SK-N-SH (cell line): ENCODE measurements at regions of chr17 and their contacts with region 1.

Region 1: DNA sequence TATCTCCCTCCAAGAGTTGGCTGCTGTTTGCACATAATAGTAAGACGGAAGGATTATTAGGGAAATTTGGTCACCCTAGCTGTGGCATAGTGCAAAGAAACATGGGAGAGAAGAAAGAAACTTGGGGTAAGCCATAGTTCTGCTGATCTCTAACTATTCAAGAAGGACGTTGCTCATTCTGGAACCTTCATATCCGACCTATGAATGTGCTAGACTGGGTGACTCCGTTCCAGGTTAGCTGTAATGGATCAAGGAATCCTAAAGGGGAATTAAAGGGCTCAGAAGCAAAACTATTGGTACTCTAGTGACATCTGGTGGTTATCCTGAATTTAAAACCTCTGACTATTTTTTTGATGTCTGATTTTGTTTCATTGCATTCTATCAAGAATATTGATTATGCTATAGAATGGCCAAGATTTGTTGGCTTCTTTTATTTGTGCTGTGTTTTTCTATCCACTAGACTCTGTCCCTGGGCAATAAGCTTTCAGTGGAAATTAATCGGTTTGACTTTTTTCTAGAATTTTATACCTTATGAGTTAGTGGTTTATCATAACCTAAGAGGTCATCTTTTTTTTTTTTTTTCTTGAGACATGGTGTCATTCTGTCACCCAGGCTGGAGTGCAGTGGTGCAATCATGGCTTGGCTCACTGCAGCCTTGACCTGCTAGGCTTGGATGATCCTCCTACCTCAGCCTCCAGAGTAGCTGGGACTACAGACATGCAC is 19.5 kb downstream of the PCTP start:
- DNase-seq: peak; percentile 73
- H3K4me3 ChIP-seq: no peak overlapping the region; a peak in 1 of 4 replicates
- H3K27ac ChIP-seq: no peak overlapping the region
- H3K4me1 ChIP-seq: peaks cover 8 to 9% of the 10 kb centered on the region in 2 experiments
- H3K27me3 ChIP-seq: no peaks in the 10 kb centered on the region
- CTCF ChIP-seq: peak; percentile 85
- EP300 ChIP-seq: no peak
- RAD21 ChIP-seq: peak; percentile 94

Region 2: GRCh38 chr17:55356434-55357328 is 413.6 kb before region 1 on chr17:
- CTCF ChIA-PET with region 1: interaction called, 11 read pairs
- POLR2A ChIA-PET with region 1: no interaction called
- DNase-seq: peak; percentile 74
- H3K4me3 ChIP-seq: no peak overlapping the region
- H3K27ac ChIP-seq: no peak overlapping the region
- H3K4me1 ChIP-seq: no peaks in the 10 kb centered on the region; a peak in 1 of 4 replicates
- H3K27me3 ChIP-seq: no peaks in the 10 kb centered on the region
- CTCF ChIP-seq: peak; percentile 97
- EP300 ChIP-seq: peak in 1 of 2 experiments; percentile 38; a peak in 1 of 4 replicates
- RAD21 ChIP-seq: peak; percentile 88

Region 3: GRCh38 chr17:55601874-55602364 is 168.4 kb before region 1 on chr17:
- CTCF ChIA-PET with region 1: interaction called, 47 read pairs
- POLR2A ChIA-PET with region 1: no interaction called
- DNase-seq: peak; percentile 52
- H3K4me3 ChIP-seq: no peak overlapping the region
- H3K27ac ChIP-seq: no peak overlapping the region
- H3K4me1 ChIP-seq: no peaks in the 10 kb centered on the region
- H3K27me3 ChIP-seq: no peaks in the 10 kb centered on the region
- CTCF ChIP-seq: peak; percentile 83
- EP300 ChIP-seq: no peak
- RAD21 ChIP-seq: peak; percentile 92

Region 4: DNA sequence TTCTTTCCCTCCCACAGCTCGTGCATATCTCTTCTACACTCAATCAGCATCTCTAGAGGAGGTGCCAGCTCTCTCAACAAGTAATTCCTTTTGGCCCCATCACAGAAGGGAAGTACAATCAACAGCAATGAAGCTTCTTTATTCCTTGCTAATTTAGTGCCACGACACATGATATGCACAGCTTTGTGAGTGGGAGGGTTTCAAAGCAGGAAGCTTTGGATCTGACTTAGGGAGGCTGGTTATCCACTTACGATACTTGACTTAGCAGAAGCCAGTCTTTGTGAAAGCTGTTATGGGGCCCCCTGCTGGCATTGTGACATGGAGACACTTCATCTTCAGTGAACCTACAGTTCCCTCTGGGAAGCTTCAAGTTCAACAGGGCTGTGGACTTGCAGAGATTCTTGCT is 128.6 kb before region 1 on chr17:
- CTCF ChIA-PET with region 1: interaction called, 16 read pairs
- POLR2A ChIA-PET with region 1: no interaction called
- DNase-seq: peak; percentile 49
- H3K4me3 ChIP-seq: no peak overlapping the region
- H3K27ac ChIP-seq: no peak overlapping the region
- H3K4me1 ChIP-seq: no peaks in the 10 kb centered on the region; a peak in 1 of 4 replicates
- H3K27me3 ChIP-seq: no peaks in the 10 kb centered on the region; the same call in 1 of the 2 replicates
- CTCF ChIP-seq: peak; percentile 78
- EP300 ChIP-seq: no peak
- RAD21 ChIP-seq: peak; percentile 78

Region 5: DNA sequence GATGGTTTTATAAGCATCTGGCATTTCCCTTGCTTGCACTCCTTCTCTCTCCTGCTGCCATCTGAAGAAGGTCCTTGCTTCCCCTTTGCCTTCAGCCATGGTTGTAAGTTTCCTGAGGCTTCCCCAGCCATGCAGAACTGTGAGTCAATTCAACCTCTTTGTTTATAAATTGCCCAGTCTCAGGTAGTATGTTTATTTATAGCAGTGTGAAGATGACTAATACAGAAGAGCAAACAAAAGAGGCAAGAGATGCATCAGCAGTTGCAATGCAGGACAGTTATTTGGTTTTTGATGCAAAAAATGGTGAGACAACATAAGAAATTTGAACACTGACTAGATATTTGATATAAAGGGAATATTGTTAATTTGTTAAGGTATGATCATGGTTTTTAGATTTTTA is 64.5 kb before region 1 on chr17:
- CTCF ChIA-PET with region 1: interaction called, 18 read pairs
- POLR2A ChIA-PET with region 1: no interaction called
- DNase-seq: no peak
- H3K4me3 ChIP-seq: no peak overlapping the region
- H3K27ac ChIP-seq: no peak overlapping the region; a peak in 1 of 4 replicates
- H3K4me1 ChIP-seq: peaks cover 0 to 18% of the 10 kb centered on the region in 2 experiments; a peak in 2 of 4 replicates
- H3K27me3 ChIP-seq: peaks cover 7% of the 10 kb centered on the region; the same call in 1 of the 2 replicates
- CTCF ChIP-seq: no peak
- EP300 ChIP-seq: no peak
- RAD21 ChIP-seq: no peak

Region 6: DNA sequence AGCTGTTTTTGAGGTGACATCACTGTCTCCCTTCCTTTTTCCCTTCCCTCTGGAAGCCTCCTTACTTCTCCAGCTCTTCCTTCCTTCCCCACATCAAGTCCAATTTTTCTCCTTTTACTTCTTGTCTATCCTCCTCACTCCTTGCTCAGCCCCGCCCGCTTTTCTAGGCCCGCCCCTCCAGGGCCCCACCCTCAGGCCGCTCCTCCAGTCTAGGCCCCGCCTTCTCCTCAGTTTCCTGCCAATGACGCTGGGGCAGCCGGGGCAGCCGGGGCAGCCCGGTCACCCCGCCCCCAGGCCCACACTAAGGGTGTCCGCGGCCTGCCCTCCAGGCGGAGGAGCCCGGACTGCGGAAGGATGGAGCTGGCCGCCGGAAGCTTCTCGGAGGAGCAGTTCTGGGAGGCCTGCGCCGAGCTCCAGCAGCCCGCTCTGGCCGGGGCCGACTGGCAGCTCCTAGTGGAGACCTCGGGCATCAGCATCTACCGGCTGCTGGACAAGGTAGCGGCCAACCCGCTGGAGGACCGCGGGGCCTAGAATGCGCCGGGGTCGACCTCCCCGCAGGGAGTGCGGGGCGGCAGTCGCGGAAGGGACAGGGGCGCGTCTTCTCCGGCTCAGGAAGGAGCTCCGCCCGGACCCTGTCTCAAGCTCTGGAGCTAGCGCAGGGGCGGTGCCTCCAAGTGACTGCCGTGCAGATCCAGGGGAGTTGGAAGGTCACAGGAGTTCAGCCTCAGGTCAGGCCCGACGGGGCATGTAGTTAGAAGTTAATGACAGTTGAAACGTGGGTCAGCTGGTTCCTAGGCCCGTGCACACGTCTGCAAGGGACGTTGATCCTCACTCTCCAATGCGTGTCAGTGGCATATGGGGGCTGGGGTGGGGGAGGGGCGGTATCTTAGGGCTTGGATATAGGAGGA is 19.3 kb before region 1 on chr17 and contains the start of gene PCTP:
- CTCF ChIA-PET with region 1: interaction called, 46 read pairs
- POLR2A ChIA-PET with region 1: interaction called, 4 read pairs
- DNase-seq: peak; percentile 98
- H3K4me3 ChIP-seq: peak within 1 kb of the TSS; percentile 86 to 98
- H3K27ac ChIP-seq: peak within 1 kb of the TSS; percentile 74 to 94
- H3K4me1 ChIP-seq: peaks cover 0 to 10% of the 10 kb centered on the region in 2 experiments; a peak in 2 of 4 replicates
- H3K27me3 ChIP-seq: no peaks in the 10 kb centered on the region
- CTCF ChIP-seq: peak; percentile 52
- EP300 ChIP-seq: peak in 1 of 2 experiments; percentile 66; a peak in 1 of 4 replicates
- RAD21 ChIP-seq: peak; percentile 32
- polyA plus RNA-seq, gene PCTP: 20.8 and 25.1 TPM in 2 replicates

Region 7: DNA sequence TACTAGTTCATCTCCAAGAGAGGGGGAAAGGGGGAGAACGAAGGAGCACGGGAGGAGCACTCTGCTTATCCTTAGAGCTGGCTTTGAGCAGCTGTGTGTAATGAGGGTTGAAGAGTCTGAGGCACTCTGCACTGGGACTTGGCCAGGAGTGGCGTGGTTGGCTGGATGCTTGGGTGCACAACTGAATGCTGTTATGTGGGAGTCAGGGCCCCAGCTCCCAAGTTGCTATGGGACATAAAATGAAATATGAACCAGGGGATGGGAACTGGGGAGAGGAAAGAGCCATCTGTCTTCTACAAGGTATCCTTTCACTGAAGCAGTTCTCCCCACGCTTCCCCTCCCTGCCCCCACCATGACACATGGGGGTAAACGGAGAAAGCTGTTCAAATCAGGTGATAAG is 277.0 kb after region 1 on chr17:
- CTCF ChIA-PET with region 1: no interaction called
- POLR2A ChIA-PET with region 1: no interaction called
- DNase-seq: no peak
- H3K4me3 ChIP-seq: no peak overlapping the region
- H3K27ac ChIP-seq: no peak overlapping the region
- H3K4me1 ChIP-seq: no peaks in the 10 kb centered on the region
- H3K27me3 ChIP-seq: no peaks in the 10 kb centered on the region
- CTCF ChIP-seq: no peak
- EP300 ChIP-seq: no peak
- RAD21 ChIP-seq: no peak